GM12878 (cell line): ENCODE measurements at regions of chr7 and their contacts with region 1.

Region 1: DNA sequence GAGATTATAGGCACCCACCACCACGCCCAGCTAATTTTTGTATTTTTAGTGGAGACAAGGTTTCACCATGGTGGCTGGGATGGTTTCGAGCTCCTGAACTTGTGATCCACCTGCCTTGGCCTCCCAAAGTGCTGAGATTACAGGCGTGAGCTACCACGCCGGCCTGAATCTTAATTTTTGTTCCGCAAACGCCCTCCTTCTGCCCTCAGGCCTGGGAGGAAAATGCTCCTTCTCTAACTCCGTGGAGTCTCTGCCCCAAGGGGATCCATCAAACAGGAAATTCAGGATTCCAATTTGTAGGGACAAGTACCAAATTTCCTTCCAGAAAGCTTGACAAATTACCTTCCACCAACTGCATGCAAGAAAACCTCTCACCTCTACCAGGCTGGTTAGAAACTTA is 43.2 kb downstream of the RBAK start:
- DNase-seq: no peak
- ATAC-seq: no peak
- H3K4me3 ChIP-seq: no peak overlapping the region
- H3K27ac ChIP-seq: no peak overlapping the region
- H3K4me1 ChIP-seq: no peaks in the 10 kb centered on the region
- H3K27me3 ChIP-seq: no peaks in the 10 kb centered on the region
- CTCF ChIP-seq: no peak
- EP300 ChIP-seq: no peak
- POLR2A ChIP-seq: no peak
- RAD21 ChIP-seq: no peak

Region 2: DNA sequence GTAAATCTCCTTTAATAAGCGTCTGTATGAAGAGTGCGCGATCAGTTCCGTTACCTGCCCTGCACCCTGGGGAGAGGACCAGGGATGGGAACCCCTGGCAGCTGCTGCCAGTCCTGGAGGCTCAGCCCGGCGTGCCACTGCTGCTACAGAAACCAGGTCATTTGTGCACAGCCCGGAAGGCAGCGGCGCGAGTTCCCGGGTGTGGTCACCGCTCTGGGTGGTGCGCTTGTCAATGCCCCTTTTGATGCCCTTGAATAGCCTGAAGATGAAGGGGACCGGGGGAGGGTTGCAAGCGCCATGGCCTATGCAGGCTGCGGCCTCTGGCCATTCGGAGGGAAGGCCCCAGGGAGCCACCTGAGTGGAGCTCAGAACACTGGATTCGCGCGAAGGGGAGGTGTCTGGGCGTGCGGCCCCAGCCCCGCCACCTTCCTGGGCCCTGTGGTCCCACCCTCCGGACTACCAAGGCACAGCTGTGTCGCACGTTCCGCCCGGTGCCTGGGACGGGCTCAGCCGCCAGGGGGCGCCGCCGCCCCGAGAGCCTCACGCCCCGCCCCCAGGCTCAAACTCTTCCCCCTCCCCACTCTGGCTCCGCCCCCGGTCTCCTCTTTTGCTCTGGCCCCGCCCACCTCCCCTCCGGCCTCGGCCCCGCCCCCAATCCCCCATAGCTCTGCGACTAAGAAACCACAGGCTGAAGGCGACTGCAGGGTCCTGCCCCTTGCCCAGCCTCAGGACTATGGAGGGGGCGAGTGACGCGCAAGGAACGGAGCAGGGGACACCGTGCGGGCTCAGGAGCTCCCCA is 297.0 kb before region 1 on chr7:
- CTCF ChIA-PET with region 1: interaction called, 30 read pairs
- POLR2A ChIA-PET with region 1: no interaction called
- RAD21 ChIA-PET with region 1: interaction called, 3 read pairs
- SMC1A ChIA-PET with region 1: interaction called, 3 read pairs
- in situ Hi-C with region 1: loop called (anchors 5 kb)
- intact Hi-C with region 1: no loop called
- DNase-seq: no peak
- ATAC-seq: peak; percentile 82
- H3K4me3 ChIP-seq: no peak overlapping the region
- H3K27ac ChIP-seq: no peak overlapping the region
- H3K4me1 ChIP-seq: no peaks in the 10 kb centered on the region
- H3K27me3 ChIP-seq: no peaks in the 10 kb centered on the region
- CTCF ChIP-seq: peak; percentile 21 to 69 (median 49)
- EP300 ChIP-seq: no peak
- POLR2A ChIP-seq: no peak; the same call in 1 of the 2 replicates
- RAD21 ChIP-seq: no peak

Region 3: DNA sequence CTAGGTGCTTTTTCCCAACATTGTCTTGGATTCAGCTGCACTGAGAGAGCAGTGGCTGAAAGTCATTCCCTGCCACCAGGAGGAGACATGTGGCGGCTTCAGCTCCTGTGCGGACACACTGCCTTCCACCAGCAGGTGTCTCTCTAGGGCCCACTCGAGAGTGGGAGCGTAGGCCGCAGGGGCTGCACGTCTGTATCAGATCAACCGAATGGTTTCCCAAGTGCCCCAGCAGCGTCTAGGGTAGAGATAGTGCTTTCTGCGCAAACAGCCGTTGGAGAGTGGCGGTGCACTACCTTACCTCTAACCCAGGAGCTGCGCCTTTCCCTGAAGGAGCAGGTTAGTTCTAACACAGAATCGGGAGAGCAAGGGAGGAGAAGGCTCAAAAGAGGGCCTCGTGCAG is 258.7 kb before region 1 on chr7:
- CTCF ChIA-PET with region 1: interaction called, 38 read pairs
- POLR2A ChIA-PET with region 1: no interaction called
- RAD21 ChIA-PET with region 1: interaction called, 13 read pairs
- SMC1A ChIA-PET with region 1: interaction called, 8 read pairs
- in situ Hi-C with region 1: loop called (anchors 5 kb)
- intact Hi-C with region 1: loop called (anchors 1 kb)
- DNase-seq: peak; percentile 11
- ATAC-seq: peak; percentile 99
- H3K4me3 ChIP-seq: no peak overlapping the region
- H3K27ac ChIP-seq: no peak overlapping the region
- H3K4me1 ChIP-seq: no peaks in the 10 kb centered on the region
- H3K27me3 ChIP-seq: no peaks in the 10 kb centered on the region
- CTCF ChIP-seq: peak; percentile 87 to 98 (median 95)
- EP300 ChIP-seq: no peak
- POLR2A ChIP-seq: no peak
- RAD21 ChIP-seq: peak; percentile 58

Region 4: DNA sequence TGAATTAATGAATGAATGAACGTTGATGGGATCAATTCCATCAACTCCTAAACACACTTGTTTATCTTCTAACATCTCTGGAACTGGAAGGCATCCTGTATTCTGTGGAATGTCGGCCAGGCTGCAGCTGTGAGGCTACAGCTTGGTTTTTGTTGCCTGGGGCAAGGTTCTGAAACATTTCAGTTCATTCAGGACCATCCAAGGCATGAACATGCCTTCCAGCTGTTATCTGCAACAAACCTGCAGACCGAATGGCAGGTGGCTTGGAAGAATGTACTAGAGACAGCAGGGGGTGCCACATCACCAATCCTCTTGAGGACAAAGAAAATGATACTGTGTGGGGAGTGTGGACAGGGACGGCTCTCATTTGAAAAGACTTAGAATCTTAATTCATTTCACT is 239.5 kb before region 1 on chr7:
- CTCF ChIA-PET with region 1: interaction called, 7 read pairs
- POLR2A ChIA-PET with region 1: interaction called, 3 read pairs
- RAD21 ChIA-PET with region 1: interaction called, 3 read pairs
- SMC1A ChIA-PET with region 1: interaction called, 6 read pairs
- in situ Hi-C with region 1: no loop called
- intact Hi-C with region 1: loop called (anchors 5 kb)
- DNase-seq: no peak
- ATAC-seq: peak; percentile 69
- H3K4me3 ChIP-seq: no peak overlapping the region
- H3K27ac ChIP-seq: no peak overlapping the region
- H3K4me1 ChIP-seq: no peaks in the 10 kb centered on the region
- H3K27me3 ChIP-seq: no peaks in the 10 kb centered on the region; a peak in 1 of 4 replicates
- CTCF ChIP-seq: peak; percentile 33 to 48 (median 33); a peak in 4 of 6 replicates
- EP300 ChIP-seq: no peak
- POLR2A ChIP-seq: no peak
- RAD21 ChIP-seq: peak; percentile 42

Region 5: GRCh38 chr7:4973728-4974198 is 115.1 kb before region 1 on chr7:
- CTCF ChIA-PET with region 1: interaction called, 15 read pairs
- POLR2A ChIA-PET with region 1: no interaction called
- RAD21 ChIA-PET with region 1: interaction called, 18 read pairs
- SMC1A ChIA-PET with region 1: interaction called, 7 read pairs
- in situ Hi-C with region 1: loop called (anchors 5 kb)
- intact Hi-C with region 1: loop called (anchors 1 kb)
- DNase-seq: peak; percentile 69
- ATAC-seq: peak; percentile 96
- H3K4me3 ChIP-seq: peak overlapping the region; percentile 76; the same call in 1 of the 2 replicates
- H3K27ac ChIP-seq: peak overlapping the region; percentile 48
- H3K4me1 ChIP-seq: no peaks in the 10 kb centered on the region
- H3K27me3 ChIP-seq: no peaks in the 10 kb centered on the region
- CTCF ChIP-seq: peak; percentile 85 to 89 (median 86)
- EP300 ChIP-seq: no peak
- POLR2A ChIP-seq: peak; percentile 89
- RAD21 ChIP-seq: peak; percentile 76